ENCODE measurements at regions of chr3 and their contacts with region 1.

Region 1: DNA sequence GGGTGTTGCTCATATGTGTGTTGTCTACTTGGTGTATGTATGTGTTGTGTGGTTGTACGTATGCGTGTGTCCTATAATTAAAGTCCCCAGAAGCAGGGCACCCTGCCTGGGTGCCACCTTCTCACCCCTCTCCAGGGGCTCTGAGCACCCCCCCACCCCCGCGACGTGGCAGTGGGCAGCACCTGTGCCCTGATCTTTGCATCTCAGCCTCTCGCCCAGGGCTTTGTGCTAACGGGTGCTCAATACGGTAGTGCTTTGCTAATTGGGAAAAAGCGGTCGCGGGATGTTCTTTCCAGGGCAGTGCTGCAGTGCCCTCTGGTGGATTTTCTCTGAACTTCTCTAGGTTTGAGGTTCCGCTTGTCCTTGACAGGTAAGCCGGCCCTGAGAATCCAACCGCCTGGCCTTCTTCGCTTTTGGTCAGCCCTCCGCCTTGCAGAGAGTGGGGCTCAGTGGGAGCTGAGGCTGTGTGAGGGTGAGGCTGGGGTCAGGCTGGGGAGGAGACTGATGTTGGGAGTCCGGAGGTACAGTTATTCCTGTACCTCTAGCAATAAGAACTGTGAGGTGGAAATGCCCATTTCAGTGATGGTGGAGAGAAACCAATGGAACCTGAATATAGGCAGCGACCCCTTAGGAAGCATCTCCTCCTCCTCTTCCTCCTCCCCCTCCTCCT is 17.6 kb upstream of the EPHB3 start:
- DNase-seq: peak; percentile 65

Region 2: DNA sequence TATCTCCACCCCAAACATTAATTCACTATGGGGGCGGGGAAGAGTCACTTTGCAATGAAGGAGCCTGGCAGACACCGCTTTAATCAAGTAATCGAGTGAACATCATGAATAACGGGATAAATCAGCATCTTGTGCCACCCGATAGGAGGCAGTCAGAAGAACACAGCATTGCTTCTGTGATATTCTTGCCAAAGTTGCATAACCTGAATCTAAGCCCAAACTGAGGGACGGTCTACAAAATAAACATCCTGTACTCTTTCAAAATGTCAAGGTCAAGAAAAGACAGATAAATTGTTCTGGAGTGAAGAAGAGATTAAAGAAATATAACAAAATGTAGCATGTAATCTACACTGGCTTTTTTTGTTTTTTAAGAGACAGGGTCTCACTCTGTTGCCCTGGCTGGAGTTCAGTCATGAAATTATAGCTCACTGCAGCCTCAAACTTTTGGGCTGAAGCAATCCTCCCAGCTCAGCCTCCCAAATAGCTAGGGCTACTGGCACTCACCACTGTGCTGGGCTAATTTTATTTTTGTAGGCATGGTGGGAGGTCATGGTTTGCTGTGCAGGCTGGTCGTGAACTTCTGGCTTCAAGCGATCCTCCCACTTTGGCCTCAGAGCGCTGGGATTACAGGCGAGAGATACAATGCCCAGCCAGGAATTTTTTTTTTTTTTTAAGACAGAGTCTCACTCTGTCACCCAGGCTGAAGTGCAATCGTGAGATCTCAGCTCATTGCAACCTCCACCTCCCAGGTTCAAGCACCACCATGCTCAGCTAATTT is 334.6 kb before region 1 on chr3:
- in situ Hi-C with region 1: no loop called
- DNase-seq: no peak

Region 3: GRCh38 chr3:184362668-184363540 is 181.1 kb before region 1 on chr3:
- in situ Hi-C with region 1: loop called (anchors 25 kb)
- DNase-seq: peak; percentile 97

Region 4: GRCh38 chr3:184672977-184673870 is 129.2 kb after region 1 on chr3:
- in situ Hi-C with region 1: no loop called
- DNase-seq: no peak